ENCODE measurements at regions of chr6 and their contacts with region 1.

Region 1: DNA sequence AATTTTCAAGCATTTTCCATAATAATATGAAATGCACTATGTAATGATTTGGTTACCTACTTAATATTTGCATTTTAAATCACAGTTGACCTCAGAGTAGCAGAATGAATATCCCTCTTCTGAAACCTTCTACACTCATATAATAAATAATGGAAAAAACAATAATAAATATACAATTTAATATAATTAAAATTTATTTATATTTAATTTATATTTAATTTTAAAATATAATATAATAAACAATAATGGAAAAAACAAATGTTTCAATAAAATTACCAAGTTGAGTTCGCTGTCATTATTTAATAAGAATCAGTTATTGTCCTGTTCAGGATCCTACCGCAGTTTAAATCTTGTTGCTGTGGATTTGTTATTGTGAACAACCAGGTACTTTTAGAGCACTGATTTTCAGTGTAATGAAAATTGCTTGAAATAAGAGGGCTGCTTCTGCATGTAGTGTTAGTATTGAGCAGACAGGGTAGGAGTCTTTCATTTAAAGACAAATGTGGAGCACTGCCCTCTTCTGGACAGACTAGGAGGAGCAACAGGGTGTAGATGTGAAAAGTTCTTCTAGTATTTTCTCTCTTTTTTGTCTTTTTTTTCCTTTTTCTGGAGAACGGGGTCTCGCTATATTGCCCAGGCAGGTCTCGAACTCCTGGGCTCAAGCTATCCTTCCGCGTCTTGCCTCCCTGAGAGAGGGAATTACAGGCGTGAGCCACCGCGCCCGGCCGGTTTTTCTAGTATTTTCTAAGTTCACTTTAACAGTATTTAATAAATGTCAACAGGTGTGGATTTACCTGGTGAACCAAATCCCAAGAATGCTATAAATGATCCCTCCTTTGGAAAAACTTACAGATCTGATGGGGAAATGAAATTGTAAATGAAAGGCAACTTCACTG is 13.6 kb downstream of the TRAPPC3L start:
- DNase-seq: peak; percentile 66
- ATAC-seq: peak; percentile 83
- H3K4me3 ChIP-seq: no peak overlapping the region
- H3K27ac ChIP-seq: no peak overlapping the region
- H3K4me1 ChIP-seq: peaks cover 15% of the 10 kb centered on the region
- H3K27me3 ChIP-seq: peaks cover 0 to 13% of the 10 kb centered on the region in 2 experiments; a peak in 3 of 5 replicates
- CTCF ChIP-seq: peak; percentile 73
- EP300 ChIP-seq: no peak
- POLR2A ChIP-seq: no peak
- RAD21 ChIP-seq: peak; percentile 52; the same call in 1 of the 2 replicates

Region 2: DNA sequence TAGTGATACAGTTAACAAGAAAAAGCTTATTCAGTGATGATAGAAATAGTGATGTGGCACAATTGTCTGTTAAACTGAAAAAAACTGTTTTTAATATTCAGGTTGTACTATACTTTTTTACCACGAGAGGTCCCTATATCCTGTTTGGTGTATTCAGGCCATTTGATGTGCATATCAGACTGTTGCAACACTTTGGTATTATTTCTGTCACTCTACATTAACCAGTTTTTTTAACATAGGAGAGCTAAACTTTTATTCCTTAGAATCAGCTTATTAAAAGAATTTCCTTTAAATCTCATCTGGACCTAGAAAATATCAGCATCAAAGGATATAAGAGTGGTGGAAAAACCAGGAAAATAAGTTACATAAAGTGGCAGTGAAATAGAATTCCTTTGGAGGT is 314.9 kb before region 1 on chr6:
- CTCF ChIA-PET with region 1: interaction called, 15 read pairs
- POLR2A ChIA-PET with region 1: no interaction called
- in situ Hi-C with region 1: no loop called
- intact Hi-C with region 1: loop called (anchors 1 kb)
- DNase-seq: peak; percentile 56
- ATAC-seq: peak; percentile 76
- H3K4me3 ChIP-seq: no peak overlapping the region
- H3K27ac ChIP-seq: no peak overlapping the region
- H3K4me1 ChIP-seq: peaks cover 11% of the 10 kb centered on the region
- H3K27me3 ChIP-seq: no peaks in the 10 kb centered on the region
- CTCF ChIP-seq: peak; percentile 61
- EP300 ChIP-seq: no peak
- POLR2A ChIP-seq: no peak
- RAD21 ChIP-seq: no peak

Region 3: DNA sequence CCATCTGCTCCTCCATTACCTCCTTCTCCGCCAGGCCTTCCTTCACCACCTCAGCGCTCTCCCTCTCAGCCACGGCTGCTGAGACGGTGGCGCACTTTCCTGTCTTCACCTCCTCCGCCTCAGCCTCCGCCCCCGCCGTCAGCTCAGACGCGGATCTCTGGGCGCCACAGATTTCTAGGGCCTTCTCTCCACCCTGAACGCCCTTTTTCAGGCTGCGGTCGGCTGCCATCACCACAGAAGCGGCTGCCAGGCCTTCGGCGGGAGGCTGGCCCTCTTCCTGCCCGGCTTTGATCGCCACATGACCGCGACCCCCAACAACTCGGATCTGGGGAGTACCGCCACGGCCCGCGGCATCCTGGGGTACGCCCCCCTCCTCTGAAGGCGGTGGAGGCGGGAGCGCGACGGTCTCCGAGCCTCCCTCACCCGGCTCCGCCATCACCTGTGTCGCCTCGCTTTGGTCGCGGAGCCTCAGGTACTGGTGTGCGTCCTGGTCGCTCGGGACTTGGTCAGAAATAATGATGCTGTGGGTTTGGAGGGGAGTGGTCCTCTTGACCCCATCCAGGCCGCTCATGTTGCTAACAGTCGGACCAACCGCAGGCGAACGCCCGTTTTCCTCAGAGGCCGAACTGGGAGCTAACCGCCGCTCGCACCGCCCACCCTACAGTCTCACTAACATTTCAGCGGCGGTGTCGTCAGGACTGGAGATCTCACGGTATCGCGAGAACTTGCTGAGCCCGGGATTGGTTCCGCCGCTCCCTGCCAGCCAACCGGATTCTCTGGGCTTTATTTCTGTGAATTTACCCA is 252.5 kb before region 1 on chr6 and contains the start of gene TSPYL1:
- CTCF ChIA-PET with region 1: no interaction called
- POLR2A ChIA-PET with region 1: no interaction called
- in situ Hi-C with region 1: loop called (anchors 10 kb)
- intact Hi-C with region 1: no loop called
- DNase-seq: peak; percentile 97
- ATAC-seq: peak; percentile 96
- H3K4me3 ChIP-seq: peak within 1 kb of the TSS; percentile 82 to 97 (median 87)
- H3K27ac ChIP-seq: peak within 1 kb of the TSS; percentile 87
- H3K4me1 ChIP-seq: peaks cover 49% of the 10 kb centered on the region
- H3K27me3 ChIP-seq: no peaks in the 10 kb centered on the region; a peak in 1 of 5 replicates
- CTCF ChIP-seq: peak; percentile 59
- EP300 ChIP-seq: peak in 1 of 2 experiments; percentile 73; a peak in 2 of 4 replicates
- POLR2A ChIP-seq: peak; percentile 95 to 96
- RAD21 ChIP-seq: peak; percentile 28; the same call in 1 of the 2 replicates
- total RNA-seq, gene TSPYL1: 93.0 and 102 TPM in 2 replicates

Region 4: GRCh38 chr6:116444092-116444491 is 87.8 kb before region 1 on chr6:
- CTCF ChIA-PET with region 1: interaction called, 4 read pairs
- POLR2A ChIA-PET with region 1: no interaction called
- in situ Hi-C with region 1: no loop called
- intact Hi-C with region 1: loop called (anchors 1 kb)
- DNase-seq: peak; percentile 21
- ATAC-seq: peak; percentile 87
- H3K4me3 ChIP-seq: no peak overlapping the region
- H3K27ac ChIP-seq: no peak overlapping the region
- H3K4me1 ChIP-seq: no peaks in the 10 kb centered on the region
- H3K27me3 ChIP-seq: no peaks in the 10 kb centered on the region
- CTCF ChIP-seq: peak; percentile 51
- EP300 ChIP-seq: no peak
- POLR2A ChIP-seq: no peak
- RAD21 ChIP-seq: no peak

Region 5: DNA sequence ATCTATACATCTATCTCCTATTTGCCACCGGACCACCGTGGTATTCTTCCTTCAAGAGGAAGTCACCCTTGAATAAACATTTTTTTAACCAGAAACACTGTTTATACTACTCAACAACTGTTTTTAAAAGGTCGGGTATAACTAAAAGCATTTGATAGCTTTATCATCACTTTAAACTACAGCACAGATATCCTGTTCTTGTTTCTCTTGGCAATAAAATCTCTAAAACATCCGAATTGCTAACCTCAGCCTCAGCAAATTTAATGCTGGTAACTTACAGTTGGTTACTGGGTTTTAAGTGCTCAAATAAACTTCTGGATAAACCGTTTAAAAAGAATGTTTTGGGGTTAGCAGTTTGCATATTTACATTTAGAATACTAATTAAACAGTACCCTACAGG is 116.2 kb after region 1 on chr6:
- CTCF ChIA-PET with region 1: interaction called, 25 read pairs
- POLR2A ChIA-PET with region 1: no interaction called
- in situ Hi-C with region 1: no loop called
- intact Hi-C with region 1: loop called (anchors 1 kb)
- DNase-seq: no peak
- ATAC-seq: no peak
- H3K4me3 ChIP-seq: no peak overlapping the region
- H3K27ac ChIP-seq: no peak overlapping the region
- H3K4me1 ChIP-seq: no peaks in the 10 kb centered on the region
- H3K27me3 ChIP-seq: no peaks in the 10 kb centered on the region
- CTCF ChIP-seq: no peak
- EP300 ChIP-seq: no peak
- POLR2A ChIP-seq: no peak
- RAD21 ChIP-seq: no peak

Measured in HepG2 (cell line).